GM10248 (cell line): ENCODE measurements at regions of chr13 and their contacts with region 1.

Region 1: DNA sequence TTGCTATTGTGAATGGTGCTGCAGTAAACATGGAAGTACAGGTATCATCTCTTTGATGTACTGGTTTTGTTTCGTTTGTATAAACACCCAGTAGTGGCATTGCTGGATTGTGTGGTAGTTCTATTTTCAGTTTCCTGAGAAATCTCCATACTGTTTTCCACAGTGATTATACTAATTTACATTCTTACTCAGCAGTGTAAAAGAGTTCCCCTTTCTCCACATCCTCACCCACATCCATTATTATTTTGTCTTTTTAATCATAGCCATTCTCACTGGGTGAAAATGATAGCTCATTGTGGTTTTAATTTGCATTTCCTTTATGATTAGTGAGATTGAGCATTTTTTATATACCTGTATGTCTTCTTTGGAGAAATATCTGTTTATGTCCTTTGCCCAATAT is 62.3 kb upstream of the PARP4 start:
- DNase-seq: no peak
- CTCF ChIP-seq: no peak

Region 2: GRCh38 chr13:24664726-24665409 is 90.0 kb after region 1 on chr13:
- CTCF ChIA-PET with region 1: interaction called, 11 read pairs
- POLR2A ChIA-PET with region 1: no interaction called
- DNase-seq: no peak
- CTCF ChIP-seq: no peak

Region 3: GRCh38 chr13:24671386-24672107 is 96.7 kb after region 1 on chr13:
- CTCF ChIA-PET with region 1: interaction called, 23 read pairs
- POLR2A ChIA-PET with region 1: no interaction called
- DNase-seq: peak; percentile 54
- CTCF ChIP-seq: peak; percentile 53